Activated CD4-positive, alpha-beta memory T cell treated with anti-CD3 and anti-CD28 coated beads for 36 hours (primary cell): ENCODE measurements at regions of chr20 and their contacts with region 1.

Region 1: GRCh38 chr20:63980806-63981728 is at the start of gene PRPF6:
- DNase-seq: peak; percentile 97
- H3K4me3 Mint-ChIP-seq: peak within 1 kb of the TSS; percentile 84
- H3K27ac Mint-ChIP-seq: peak within 1 kb of the TSS; percentile 96
- H3K4me1 Mint-ChIP-seq: peaks cover 60% of the 10 kb centered on the region
- H3K27me3 Mint-ChIP-seq: no peaks in the 10 kb centered on the region
- total RNA-seq, gene PRPF6: 62.3 to 63.1 TPM

Region 2: DNA sequence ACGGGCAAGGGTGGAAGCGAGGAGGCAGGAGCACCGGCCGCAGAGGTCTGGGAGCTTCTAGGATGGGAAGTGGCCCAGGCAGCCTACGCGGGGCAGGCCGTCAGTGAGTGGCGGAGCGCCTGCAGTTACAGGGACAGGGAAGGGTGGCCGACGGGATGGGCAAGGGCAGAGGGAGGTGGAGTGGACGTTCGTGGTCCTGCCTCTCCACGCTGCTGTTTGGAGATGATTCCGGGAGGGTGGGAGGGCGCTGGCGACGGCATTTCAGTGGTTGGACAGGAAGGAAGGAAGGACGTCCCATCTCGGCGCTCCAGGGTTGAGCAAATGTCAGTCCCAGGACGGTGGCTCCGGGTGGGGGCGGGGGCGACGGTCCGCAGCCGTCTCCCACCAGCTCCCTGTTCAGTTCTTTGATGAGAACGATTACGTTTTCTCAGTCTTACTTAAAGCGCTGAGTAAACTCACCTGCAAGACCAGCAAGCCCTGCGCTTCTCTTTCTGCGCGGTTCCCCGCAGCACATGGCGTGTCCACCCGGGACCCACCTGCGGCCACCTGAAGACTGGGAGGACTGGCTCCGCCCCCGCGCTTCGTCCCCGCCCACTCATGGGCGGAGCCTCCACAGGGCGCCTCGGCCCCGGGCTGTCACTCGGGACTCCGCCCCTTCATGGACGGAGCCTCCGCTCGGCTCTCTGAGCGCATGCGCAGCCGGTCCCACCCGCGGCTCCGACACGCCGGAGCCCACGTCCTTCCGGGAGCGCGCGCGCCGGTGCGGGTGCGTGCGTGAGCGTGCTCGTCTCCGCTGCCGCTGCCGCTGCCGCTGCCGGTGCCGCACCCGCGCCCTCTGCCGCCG is 86.5 kb before region 1 on chr20 and contains the start of gene DNAJC5:
- CTCF ChIA-PET with region 1: interaction called, 5 read pairs
- POLR2A ChIA-PET with region 1: interaction called, 9 read pairs
- intact Hi-C with region 1: loop called (anchors 2 kb)
- DNase-seq: peak; percentile 97
- H3K4me3 Mint-ChIP-seq: peak within 1 kb of the TSS; percentile 97
- H3K27ac Mint-ChIP-seq: peak within 1 kb of the TSS; percentile 97
- H3K4me1 Mint-ChIP-seq: peaks cover 37% of the 10 kb centered on the region
- H3K27me3 Mint-ChIP-seq: no peaks in the 10 kb centered on the region
- total RNA-seq, gene DNAJC5: 33.7 to 33.8 TPM

Region 3: GRCh38 chr20:63955827-63956663 is 25.0 kb before region 1 on chr20 and contains the start of gene UCKL1:
- CTCF ChIA-PET with region 1: interaction called, 12 read pairs
- POLR2A ChIA-PET with region 1: interaction called, 7 read pairs
- intact Hi-C with region 1: loop called (anchors 1 kb)
- DNase-seq: peak; percentile 92
- H3K4me3 Mint-ChIP-seq: peak within 1 kb of the TSS; percentile 81
- H3K27ac Mint-ChIP-seq: peak within 1 kb of the TSS; percentile 89
- H3K4me1 Mint-ChIP-seq: peaks cover 35% of the 10 kb centered on the region
- H3K27me3 Mint-ChIP-seq: no peaks in the 10 kb centered on the region
- total RNA-seq, gene UCKL1: 26.6 to 29.6 TPM

Region 4: DNA sequence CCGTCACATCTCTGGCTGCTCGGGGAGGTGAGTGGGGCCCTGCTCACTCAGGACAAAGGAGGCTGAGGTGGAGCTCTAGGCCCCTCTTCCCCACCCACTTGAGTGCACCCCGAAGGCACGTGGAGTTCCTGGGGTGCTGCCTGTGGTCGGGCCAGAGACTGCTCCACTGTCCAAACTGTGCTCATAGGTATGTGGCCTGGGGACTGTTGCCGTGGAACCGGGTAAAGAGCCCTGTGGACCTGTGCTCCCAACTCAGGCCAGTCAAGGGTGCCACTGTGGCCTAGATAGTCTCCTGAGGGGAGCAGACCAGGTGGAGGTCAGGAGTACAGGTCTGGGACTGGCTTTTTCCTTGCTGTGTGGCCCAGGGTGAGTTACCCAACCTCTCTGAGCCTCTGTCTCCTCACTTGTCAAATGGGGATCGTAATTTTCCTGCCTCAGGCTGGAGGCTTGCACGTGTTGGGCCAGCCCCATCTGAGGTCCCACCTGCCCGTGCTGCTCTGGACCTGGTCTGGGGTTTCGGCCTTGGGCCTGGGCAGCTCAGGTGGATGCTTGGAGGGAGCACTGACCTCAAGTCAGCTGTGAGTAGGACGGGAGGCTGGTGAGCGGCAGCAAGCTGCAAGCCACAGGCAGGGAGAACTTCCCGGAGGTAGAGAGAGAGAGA is 138.7 kb after region 1 on chr20:
- CTCF ChIA-PET with region 1: interaction called, 17 read pairs
- POLR2A ChIA-PET with region 1: no interaction called
- intact Hi-C with region 1: loop called (anchors 1 kb)
- DNase-seq: no peak
- H3K4me3 Mint-ChIP-seq: peak overlapping the region; percentile 35
- H3K27ac Mint-ChIP-seq: no peak overlapping the region
- H3K4me1 Mint-ChIP-seq: peaks cover 8% of the 10 kb centered on the region
- H3K27me3 Mint-ChIP-seq: peaks cover 8% of the 10 kb centered on the region